A673 (cell line): ENCODE measurements at regions of chr16 and their contacts with region 1.

Region 1: GRCh38 chr16:11715246-11715947 is 27.3 kb downstream of the TXNDC11 start:
- DNase-seq: no peak
- H3K4me3 ChIP-seq: no peak overlapping the region
- H3K27ac ChIP-seq: no peak overlapping the region
- H3K4me1 ChIP-seq: peaks cover 5% of the 10 kb centered on the region
- H3K27me3 ChIP-seq: no peaks in the 10 kb centered on the region
- CTCF ChIP-seq: no peak

Region 2: DNA sequence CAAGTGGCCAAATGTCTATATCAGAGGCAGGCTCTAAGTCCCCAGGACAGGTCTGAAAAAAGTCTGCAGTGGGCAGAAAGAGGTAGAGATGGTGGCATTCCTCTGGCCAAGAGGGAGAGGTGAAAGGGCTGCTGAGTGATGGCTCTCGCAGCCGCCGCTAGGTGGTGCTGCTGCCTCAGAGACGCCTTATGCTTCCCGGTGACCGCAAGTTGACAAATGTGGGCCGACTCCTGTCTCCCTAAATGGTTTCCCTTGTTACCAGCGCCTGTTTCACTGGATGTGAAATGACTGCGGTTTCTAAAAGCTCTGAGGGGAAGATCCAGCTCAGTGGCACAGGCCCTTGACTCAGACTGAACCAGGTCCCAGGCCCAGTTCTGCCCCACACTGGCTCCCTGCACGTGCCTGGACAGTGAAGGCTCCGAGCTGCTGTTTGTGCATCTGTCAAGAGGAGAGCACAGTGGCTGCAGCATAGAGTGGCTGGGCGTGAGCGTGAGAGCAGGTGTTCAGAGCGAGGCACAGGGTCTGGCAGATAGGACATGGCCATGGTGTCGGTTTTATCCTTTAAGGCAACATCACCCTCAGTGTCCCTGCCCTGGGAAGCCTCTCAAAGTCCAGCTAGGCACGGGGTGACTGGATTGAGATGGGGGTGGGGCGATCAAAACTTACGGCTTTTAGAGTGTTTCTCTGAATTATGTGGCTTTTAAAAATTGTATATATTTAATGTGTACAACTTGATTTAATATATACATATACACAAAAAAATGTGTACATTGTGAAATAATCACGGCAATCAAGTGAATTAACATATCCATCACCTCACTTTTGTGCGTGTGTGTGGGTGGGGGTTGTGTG is 751.1 kb before region 1 on chr16:
- CTCF ChIA-PET with region 1: no interaction called
- POLR2A ChIA-PET with region 1: no interaction called
- intact Hi-C with region 1: loop called (anchors 1 kb)
- DNase-seq: peak; percentile 83
- H3K4me3 ChIP-seq: no peak overlapping the region
- H3K27ac ChIP-seq: no peak overlapping the region
- H3K4me1 ChIP-seq: no peaks in the 10 kb centered on the region
- H3K27me3 ChIP-seq: no peaks in the 10 kb centered on the region
- CTCF ChIP-seq: peak; percentile 98

Region 3: DNA sequence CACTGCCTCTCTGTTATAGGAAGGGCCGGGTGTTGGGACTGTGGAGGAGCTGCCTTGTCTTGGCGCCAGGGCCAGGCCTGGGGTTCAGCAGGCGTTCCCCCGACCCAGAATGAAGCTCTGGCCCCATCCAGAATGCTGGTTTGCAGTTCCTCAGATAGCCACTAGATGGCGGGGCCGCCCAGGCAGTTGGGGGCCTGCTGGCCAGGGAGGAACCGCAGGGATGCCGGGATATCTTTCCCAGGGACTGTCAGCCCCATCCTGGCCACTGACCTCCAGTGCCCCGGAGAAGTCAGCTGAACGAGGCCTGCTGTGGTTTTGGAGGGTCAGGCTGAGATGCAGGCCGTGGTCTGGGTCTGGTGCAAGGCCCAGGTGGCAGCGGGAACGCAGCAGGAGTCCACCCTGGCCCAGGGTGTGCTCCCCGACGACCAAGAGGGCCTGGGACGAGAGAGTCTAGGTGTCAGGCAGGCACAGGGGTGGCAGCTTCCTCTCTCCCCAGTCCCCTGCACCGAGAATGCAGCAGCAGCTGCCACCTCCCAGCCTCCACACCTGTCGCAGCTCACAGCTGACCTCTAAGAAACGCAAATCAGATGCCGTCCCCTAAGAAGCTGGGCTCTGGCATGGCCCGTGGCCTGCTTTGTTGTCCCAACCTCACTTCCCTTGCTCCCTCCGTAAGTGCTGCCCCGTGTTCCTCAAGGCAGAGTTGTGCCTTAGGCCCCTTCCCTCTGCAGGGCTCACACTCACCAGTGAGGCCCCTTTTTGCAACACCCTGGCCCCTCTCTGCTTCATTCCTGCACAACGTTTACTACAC is 319.0 kb before region 1 on chr16:
- CTCF ChIA-PET with region 1: interaction called, 3 read pairs
- POLR2A ChIA-PET with region 1: no interaction called
- intact Hi-C with region 1: loop called (anchors 1 kb)
- DNase-seq: peak; percentile 68
- H3K4me3 ChIP-seq: no peak overlapping the region
- H3K27ac ChIP-seq: no peak overlapping the region
- H3K4me1 ChIP-seq: no peaks in the 10 kb centered on the region
- H3K27me3 ChIP-seq: no peaks in the 10 kb centered on the region
- CTCF ChIP-seq: peak; percentile 95

Region 4: DNA sequence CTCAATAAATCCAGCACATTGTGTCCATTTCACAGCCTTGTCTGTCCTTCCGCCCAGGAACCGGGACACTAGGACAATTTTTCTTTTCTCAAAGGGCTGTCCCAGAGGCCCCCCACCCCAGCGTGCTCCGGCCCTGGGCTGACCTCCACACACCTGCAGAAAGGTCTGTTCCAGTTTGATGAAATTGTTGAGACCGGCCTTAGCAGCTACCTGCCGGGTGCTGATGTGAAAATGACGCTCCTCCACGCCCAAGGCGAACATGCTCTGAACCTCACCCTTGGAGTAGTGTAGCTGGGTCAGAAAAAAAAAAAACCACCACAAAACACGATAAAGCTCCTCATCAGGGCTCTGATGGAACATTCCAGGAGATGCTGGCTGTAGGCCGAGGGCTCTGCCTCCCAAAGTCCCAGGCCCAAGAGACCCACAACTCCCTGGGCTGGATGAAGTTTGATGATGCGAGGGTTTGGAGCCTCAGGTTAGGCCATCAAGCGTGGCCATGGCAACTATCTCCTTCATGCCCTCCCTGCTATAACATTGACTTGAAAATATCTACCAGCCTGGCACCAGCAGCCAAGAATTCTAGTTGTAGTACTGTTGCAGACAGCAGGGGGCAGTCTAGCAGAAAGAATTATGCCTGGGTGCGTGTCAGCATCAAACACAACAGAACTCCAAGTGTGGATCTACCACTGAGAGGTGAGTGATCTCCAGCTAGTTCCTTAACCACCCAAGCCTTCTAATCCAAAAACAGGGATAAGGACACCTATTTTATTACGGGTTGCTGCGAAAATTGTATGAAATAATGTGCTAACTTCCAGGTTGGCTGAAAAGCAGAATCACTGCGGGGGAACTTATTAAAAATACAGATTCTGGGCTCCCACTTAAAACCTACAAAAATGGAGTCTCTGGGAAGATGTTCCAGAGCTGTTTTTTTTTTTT is 308.1 kb before region 1 on chr16:
- CTCF ChIA-PET with region 1: interaction called, 6 read pairs
- POLR2A ChIA-PET with region 1: no interaction called
- intact Hi-C with region 1: loop called (anchors 1 kb)
- DNase-seq: peak; percentile 82
- H3K4me3 ChIP-seq: no peak overlapping the region
- H3K27ac ChIP-seq: no peak overlapping the region
- H3K4me1 ChIP-seq: peaks cover 19% of the 10 kb centered on the region
- H3K27me3 ChIP-seq: no peaks in the 10 kb centered on the region
- CTCF ChIP-seq: peak; percentile 84

Region 5: GRCh38 chr16:11535471-11535870 is 179.9 kb before region 1 on chr16:
- CTCF ChIA-PET with region 1: interaction called, 3 read pairs
- POLR2A ChIA-PET with region 1: no interaction called
- intact Hi-C with region 1: loop called (anchors 2 kb)
- DNase-seq: no peak
- H3K4me3 ChIP-seq: no peak overlapping the region
- H3K27ac ChIP-seq: no peak overlapping the region
- H3K4me1 ChIP-seq: no peaks in the 10 kb centered on the region
- H3K27me3 ChIP-seq: no peaks in the 10 kb centered on the region
- CTCF ChIP-seq: no peak

Region 6: GRCh38 chr16:11757671-11758545 is 42.5 kb after region 1 on chr16:
- CTCF ChIA-PET with region 1: no interaction called
- POLR2A ChIA-PET with region 1: no interaction called
- intact Hi-C with region 1: no loop called
- DNase-seq: no peak
- H3K4me3 ChIP-seq: no peak overlapping the region
- H3K27ac ChIP-seq: no peak overlapping the region
- H3K4me1 ChIP-seq: no peaks in the 10 kb centered on the region
- H3K27me3 ChIP-seq: no peaks in the 10 kb centered on the region
- CTCF ChIP-seq: no peak